ENCODE measurements at regions of chr14 and their contacts with region 1.

Region 1: GRCh38 chr14:78758332-78758731 is 588.2 kb downstream of the NRXN3 start:
- DNase-seq: no peak
- H3K4me3 ChIP-seq: no peak overlapping the region
- H3K27ac ChIP-seq: no peak overlapping the region
- H3K4me1 ChIP-seq: peaks cover 0 to 6% (median 2%) of the 10 kb centered on the region in 4 experiments; a peak in 3 of 7 replicates
- H3K27me3 ChIP-seq: no peaks in the 10 kb centered on the region
- CTCF ChIP-seq: peak in 2 of 3 experiments; percentile 52 to 75; a peak in 2 of 4 replicates
- EP300 ChIP-seq: no peak
- POLR2A ChIP-seq: no peak
- RAD21 ChIP-seq: peak; percentile 63 to 71

Region 2: GRCh38 chr14:78697341-78697740 is 61.0 kb before region 1 on chr14:
- CTCF ChIA-PET with region 1: interaction called, 32 read pairs
- POLR2A ChIA-PET with region 1: no interaction called
- DNase-seq: no peak
- H3K4me3 ChIP-seq: no peak overlapping the region
- H3K27ac ChIP-seq: no peak overlapping the region
- H3K4me1 ChIP-seq: no peaks in the 10 kb centered on the region
- H3K27me3 ChIP-seq: no peaks in the 10 kb centered on the region
- CTCF ChIP-seq: peak in 2 of 3 experiments; percentile 47 to 69; a peak in 2 of 4 replicates
- EP300 ChIP-seq: no peak
- POLR2A ChIP-seq: no peak
- RAD21 ChIP-seq: peak; percentile 77 to 83

Region 3: DNA sequence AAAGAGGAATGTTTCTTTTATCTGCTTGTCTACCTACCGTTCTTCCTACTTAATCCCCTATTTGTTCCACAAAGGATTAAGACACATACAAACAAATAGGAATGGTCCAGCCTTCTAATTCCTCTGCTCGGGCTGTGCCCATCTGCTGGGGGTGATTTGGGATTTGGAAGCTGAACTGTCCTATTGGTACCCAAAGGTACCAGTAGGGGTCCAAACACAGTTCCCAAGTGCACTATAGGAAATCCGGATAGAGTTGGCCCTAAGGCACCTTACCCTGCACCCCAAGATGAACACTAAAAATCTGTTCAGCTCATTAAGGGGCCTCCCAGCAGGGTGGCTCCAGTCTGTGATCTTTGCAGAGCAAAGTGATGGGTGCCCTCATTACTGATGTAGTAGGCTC is 21.2 kb before region 1 on chr14:
- CTCF ChIA-PET with region 1: interaction called, 15 read pairs
- POLR2A ChIA-PET with region 1: no interaction called
- DNase-seq: no peak
- H3K4me3 ChIP-seq: no peak overlapping the region
- H3K27ac ChIP-seq: no peak overlapping the region
- H3K4me1 ChIP-seq: peaks cover 0 to 7% (median 2%) of the 10 kb centered on the region in 4 experiments; a peak in 4 of 7 replicates
- H3K27me3 ChIP-seq: no peaks in the 10 kb centered on the region
- CTCF ChIP-seq: peak in 1 of 3 experiments; percentile 20; a peak in 2 of 4 replicates
- EP300 ChIP-seq: no peak
- POLR2A ChIP-seq: no peak
- RAD21 ChIP-seq: no peak

Region 4: DNA sequence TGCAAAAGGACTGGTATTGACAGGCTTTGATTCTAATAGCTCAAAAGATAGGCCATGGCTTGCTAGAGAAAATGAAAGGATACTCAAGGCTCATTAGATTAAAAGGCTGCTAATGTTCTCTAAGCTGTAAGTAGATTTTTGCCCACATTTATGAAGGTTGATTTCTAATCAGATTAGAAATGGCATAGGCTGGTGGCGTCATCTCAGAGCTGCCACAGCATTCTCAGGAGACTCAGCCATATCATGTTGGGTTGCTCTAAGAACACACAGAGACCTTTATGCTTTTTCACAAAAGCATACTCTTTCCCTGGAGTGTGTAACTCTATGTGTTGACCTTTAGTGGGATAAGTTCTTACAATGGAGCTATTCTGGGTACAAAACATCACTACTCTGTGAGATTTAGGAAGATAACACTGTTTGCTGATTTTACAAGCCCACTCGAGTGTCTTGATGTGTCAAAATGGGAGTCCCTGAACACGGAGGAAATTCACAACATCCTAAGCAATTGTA is 12.2 kb before region 1 on chr14:
- CTCF ChIA-PET with region 1: interaction called, 15 read pairs
- POLR2A ChIA-PET with region 1: no interaction called
- DNase-seq: no peak
- H3K4me3 ChIP-seq: no peak overlapping the region
- H3K27ac ChIP-seq: no peak overlapping the region
- H3K4me1 ChIP-seq: no peaks in the 10 kb centered on the region
- H3K27me3 ChIP-seq: no peaks in the 10 kb centered on the region
- CTCF ChIP-seq: no peak
- EP300 ChIP-seq: no peak
- POLR2A ChIP-seq: no peak
- RAD21 ChIP-seq: no peak

Region 5: GRCh38 chr14:78790271-78790670 is 31.9 kb after region 1 on chr14:
- CTCF ChIA-PET with region 1: interaction called, 11 read pairs
- POLR2A ChIA-PET with region 1: no interaction called
- DNase-seq: no peak
- H3K4me3 ChIP-seq: no peak overlapping the region
- H3K27ac ChIP-seq: no peak overlapping the region
- H3K4me1 ChIP-seq: peaks cover 0 to 3% (median 0%) of the 10 kb centered on the region in 4 experiments; a peak in 1 of 7 replicates
- H3K27me3 ChIP-seq: no peaks in the 10 kb centered on the region
- CTCF ChIP-seq: peak; percentile 13 to 71 (median 52)
- EP300 ChIP-seq: no peak
- POLR2A ChIP-seq: no peak
- RAD21 ChIP-seq: peak; percentile 48 to 54

Region 6: GRCh38 chr14:78875049-78875448 is 116.7 kb after region 1 on chr14:
- CTCF ChIA-PET with region 1: no interaction called
- POLR2A ChIA-PET with region 1: no interaction called
- DNase-seq: no peak
- H3K4me3 ChIP-seq: no peak overlapping the region
- H3K27ac ChIP-seq: no peak overlapping the region
- H3K4me1 ChIP-seq: peaks cover 0 to 4% (median under 1%) of the 10 kb centered on the region in 4 experiments; a peak in 2 of 7 replicates
- H3K27me3 ChIP-seq: no peaks in the 10 kb centered on the region
- CTCF ChIP-seq: no peak
- EP300 ChIP-seq: no peak
- POLR2A ChIP-seq: no peak
- RAD21 ChIP-seq: no peak

Measured in H1 (cell line).